CD8-positive, alpha-beta T cell (primary cell): ENCODE measurements at regions of chr2 and their contacts with region 1.

Region 1: DNA sequence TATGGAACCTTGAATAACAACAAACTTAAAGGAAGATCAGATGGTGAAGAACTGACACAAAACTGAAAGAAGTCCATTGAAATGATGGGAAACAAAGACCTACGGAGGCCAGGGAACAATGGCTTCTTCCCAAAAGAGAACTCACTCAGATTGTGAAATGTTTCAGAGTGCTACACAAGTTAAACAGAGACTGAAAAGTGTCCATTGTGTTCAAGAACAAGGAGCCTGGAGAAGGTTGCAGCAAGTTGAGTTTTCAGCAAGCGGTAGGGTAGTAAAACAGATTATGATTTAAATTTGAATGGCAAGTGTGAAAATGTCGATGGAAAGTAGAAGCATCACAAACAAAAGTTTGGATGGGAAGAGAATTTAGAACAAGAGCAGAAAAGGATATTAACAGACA is 700.1 kb upstream of the NXPH2 start:
- DNase-seq: no peak
- ATAC-seq: no peak
- H3K4me3 ChIP-seq: no peak overlapping the region
- H3K4me3 Mint-ChIP-seq: no peak overlapping the region
- H3K27ac ChIP-seq: no peak overlapping the region
- H3K27ac Mint-ChIP-seq: no peak overlapping the region
- H3K4me1 ChIP-seq: no peaks in the 10 kb centered on the region
- H3K4me1 Mint-ChIP-seq: no peaks in the 10 kb centered on the region
- H3K27me3 ChIP-seq: no peaks in the 10 kb centered on the region
- H3K27me3 Mint-ChIP-seq: no peaks in the 10 kb centered on the region
- CTCF ChIP-seq: no peak

Region 2: DNA sequence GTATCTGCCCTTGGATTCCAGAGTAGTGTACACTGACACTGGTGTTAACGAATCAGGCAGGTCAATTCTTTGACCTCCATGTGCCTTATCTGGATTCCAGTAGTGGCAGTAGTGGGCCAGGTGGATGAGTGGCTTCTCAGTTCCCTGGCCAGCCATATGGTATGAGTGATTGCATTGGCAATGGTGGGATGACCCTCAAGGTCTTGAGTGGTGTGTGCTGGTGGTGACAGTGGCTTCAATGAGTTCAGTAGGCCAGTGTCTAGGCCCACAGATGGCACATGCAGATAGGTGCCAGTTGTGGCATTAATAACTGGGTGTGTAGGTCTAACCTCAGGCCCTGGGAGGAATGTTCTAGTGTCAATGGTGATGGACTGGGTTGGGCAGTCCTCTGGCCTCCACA is 26.0 kb before region 1 on chr2:
- CTCF ChIA-PET with region 1: no interaction called
- POLR2A ChIA-PET with region 1: no interaction called
- intact Hi-C with region 1: loop called in 1 of 2 experiments (anchors 1 kb)
- DNase-seq: no peak
- ATAC-seq: no peak
- H3K4me3 ChIP-seq: no peak overlapping the region
- H3K4me3 Mint-ChIP-seq: no peak overlapping the region
- H3K27ac ChIP-seq: no peak overlapping the region
- H3K27ac Mint-ChIP-seq: no peak overlapping the region
- H3K4me1 ChIP-seq: no peaks in the 10 kb centered on the region
- H3K4me1 Mint-ChIP-seq: no peaks in the 10 kb centered on the region
- H3K27me3 ChIP-seq: no peaks in the 10 kb centered on the region
- H3K27me3 Mint-ChIP-seq: no peaks in the 10 kb centered on the region
- CTCF ChIP-seq: no peak